A549 (cell line): ENCODE measurements at regions of chr11 and their contacts with region 1.

Region 1: DNA sequence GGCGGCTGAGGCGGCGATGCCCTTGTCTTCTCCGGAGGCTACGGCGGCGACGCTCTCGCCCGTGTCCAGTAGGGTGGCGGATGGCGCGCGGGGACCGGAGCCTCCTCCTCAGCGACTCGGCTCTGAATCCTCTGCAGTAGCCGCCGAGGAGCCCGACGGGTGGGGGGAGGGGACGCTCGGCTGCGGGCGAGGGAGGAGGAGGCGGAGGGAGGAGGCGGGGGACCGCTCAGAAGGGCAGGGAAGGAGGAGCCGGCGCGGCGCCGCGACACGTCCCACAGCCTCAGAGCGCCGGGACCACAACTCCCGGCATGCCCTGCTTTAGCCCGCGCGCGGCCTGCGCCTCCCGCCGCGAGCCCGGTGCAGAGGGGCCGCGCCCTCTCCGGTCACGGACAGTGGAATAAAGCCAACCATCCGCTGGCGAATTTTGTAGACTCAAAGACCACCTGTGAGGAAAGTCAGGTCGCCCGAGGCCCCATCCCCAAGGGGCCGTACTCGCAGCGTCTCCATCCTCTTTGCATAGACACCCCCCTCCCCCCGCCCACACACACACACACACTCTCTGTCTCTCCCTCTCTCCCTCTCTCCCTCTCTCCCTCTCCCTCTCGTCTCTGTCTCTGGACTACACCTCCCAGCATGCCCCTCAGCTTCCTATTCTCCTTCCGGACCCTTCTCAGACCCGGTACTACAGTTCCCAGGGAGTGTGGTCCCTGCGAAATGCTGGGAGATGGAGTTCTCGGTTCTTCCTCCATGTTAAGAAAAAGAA is at the start of gene FAM168A:
- DNase-seq: peak; percentile 98
- ATAC-seq: peak; percentile 97 to 98
- H3K4me3 ChIP-seq: peak within 1 kb of the TSS; percentile 86
- H3K27ac ChIP-seq: peak within 1 kb of the TSS; percentile 90 to 99
- H3K4me1 ChIP-seq: peaks cover 23% of the 10 kb centered on the region; the same call in 2 of the 3 replicates
- CTCF ChIP-seq: no peak
- EP300 ChIP-seq: no peak
- POLR2A ChIP-seq: peak; percentile 84
- RAD21 ChIP-seq: peak in 1 of 2 experiments; percentile 19; a peak in 2 of 5 replicates
- polyA plus RNA-seq, gene FAM168A: 15.3 and 21.7 TPM in 2 replicates

Region 2: DNA sequence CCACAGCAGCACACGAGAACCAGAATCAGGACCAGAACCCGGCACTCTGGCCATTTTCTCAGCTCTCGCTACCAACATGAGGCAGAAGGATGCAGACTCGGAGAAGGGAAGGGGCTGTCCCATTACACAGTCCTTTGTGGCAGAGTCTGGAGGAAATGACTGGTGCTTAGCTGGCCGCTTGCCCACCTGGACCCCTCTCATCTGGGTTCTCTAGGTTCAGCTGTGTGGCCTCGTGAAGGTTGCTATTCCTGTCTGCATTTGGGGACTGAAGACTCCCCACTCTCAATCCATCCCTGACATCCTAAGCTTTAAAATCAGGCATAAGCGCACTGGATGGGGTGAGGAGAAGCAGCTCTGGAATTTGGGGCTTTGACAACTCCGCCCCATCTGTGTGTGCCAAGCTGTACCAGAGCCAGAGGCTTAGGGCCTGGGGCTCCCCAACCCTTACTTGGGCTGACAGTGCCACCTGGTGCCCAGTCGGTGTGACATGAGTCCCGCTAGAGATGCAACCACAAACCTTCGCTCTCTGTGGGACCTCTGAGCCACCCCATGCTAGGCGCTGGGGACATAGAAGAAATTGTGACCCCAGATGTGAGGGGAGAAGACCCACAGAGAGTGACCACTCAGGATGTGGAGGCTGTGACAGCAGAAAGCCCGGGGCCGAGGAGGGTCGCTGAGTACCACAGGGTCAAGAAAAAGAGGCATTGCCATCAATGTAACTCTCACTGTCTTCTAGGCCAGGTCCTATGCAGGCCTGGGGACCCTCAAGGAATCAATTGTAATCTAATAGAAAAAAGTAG is 420.2 kb before region 1 on chr11:
- CTCF ChIA-PET with region 1: no interaction called
- POLR2A ChIA-PET with region 1: no interaction called
- DNase-seq: peak; percentile 70 to 91
- ATAC-seq: peak; percentile 95 to 96
- H3K4me3 ChIP-seq: no peak overlapping the region
- H3K27ac ChIP-seq: no peak overlapping the region
- H3K4me1 ChIP-seq: no peaks in the 10 kb centered on the region
- CTCF ChIP-seq: peak; percentile 84
- EP300 ChIP-seq: no peak
- POLR2A ChIP-seq: no peak
- RAD21 ChIP-seq: peak; percentile 96 to 97

Region 3: DNA sequence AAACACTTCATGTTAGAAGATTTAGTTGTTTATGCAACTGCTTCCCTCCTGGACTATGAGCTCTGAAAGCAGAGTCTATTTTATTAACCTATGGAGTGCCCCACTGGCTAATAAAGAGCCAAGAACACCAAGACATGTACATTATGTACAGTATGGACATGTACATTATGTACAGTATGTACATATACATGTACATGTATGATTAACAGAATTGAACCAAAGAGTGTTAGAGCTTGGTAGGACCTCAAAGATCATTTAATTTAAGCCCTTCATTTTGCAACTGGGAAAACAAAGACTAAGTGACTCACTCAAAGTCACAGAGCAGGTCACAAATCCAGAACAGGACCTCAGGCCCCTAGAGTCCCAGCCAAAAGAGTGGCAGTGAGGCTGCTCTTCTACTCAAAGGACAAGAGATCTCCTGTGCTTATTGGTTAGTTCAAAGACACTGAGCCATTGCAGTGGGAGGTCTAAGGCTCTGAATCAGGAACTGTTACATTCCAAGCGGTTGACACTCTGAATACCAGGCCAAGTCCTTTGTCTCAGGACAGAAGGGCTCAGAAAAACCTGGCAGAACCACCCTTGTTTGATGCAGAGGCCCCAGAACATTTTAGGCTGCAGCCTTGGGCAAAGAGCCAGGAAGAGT is 104.1 kb before region 1 on chr11:
- CTCF ChIA-PET with region 1: no interaction called
- POLR2A ChIA-PET with region 1: interaction called, 12 read pairs
- DNase-seq: peak in 1 of 2 experiments; percentile 38
- ATAC-seq: peak in 1 of 2 experiments; percentile 71; a peak in 3 of 6 replicates
- H3K4me3 ChIP-seq: no peak overlapping the region
- H3K27ac ChIP-seq: no peak overlapping the region
- H3K4me1 ChIP-seq: 0 out of 3 replicates have a peak, but pooled peaks cover 11% of the 10 kb centered on the region
- CTCF ChIP-seq: no peak
- EP300 ChIP-seq: no peak
- POLR2A ChIP-seq: no peak
- RAD21 ChIP-seq: no peak